ENCODE measurements at regions of chr1 and their contacts with region 1.

Region 1: GRCh38 chr1:33025181-33025571 is 11.5 kb downstream of the AK2 start:
- DNase-seq: no peak
- H3K4me3 Mint-ChIP-seq: peak overlapping the region; percentile 17
- H3K27ac Mint-ChIP-seq: peak overlapping the region; percentile 86
- H3K4me1 Mint-ChIP-seq: peaks cover 63% of the 10 kb centered on the region
- H3K27me3 Mint-ChIP-seq: peaks cover 2% of the 10 kb centered on the region

Region 2: GRCh38 chr1:32769524-32770220 is 255.5 kb before region 1 on chr1:
- intact Hi-C with region 1: no loop called
- DNase-seq: no peak
- H3K4me3 Mint-ChIP-seq: no peak overlapping the region
- H3K27ac Mint-ChIP-seq: no peak overlapping the region
- H3K4me1 Mint-ChIP-seq: peaks cover 13% of the 10 kb centered on the region
- H3K27me3 Mint-ChIP-seq: peaks cover 4% of the 10 kb centered on the region

Region 3: DNA sequence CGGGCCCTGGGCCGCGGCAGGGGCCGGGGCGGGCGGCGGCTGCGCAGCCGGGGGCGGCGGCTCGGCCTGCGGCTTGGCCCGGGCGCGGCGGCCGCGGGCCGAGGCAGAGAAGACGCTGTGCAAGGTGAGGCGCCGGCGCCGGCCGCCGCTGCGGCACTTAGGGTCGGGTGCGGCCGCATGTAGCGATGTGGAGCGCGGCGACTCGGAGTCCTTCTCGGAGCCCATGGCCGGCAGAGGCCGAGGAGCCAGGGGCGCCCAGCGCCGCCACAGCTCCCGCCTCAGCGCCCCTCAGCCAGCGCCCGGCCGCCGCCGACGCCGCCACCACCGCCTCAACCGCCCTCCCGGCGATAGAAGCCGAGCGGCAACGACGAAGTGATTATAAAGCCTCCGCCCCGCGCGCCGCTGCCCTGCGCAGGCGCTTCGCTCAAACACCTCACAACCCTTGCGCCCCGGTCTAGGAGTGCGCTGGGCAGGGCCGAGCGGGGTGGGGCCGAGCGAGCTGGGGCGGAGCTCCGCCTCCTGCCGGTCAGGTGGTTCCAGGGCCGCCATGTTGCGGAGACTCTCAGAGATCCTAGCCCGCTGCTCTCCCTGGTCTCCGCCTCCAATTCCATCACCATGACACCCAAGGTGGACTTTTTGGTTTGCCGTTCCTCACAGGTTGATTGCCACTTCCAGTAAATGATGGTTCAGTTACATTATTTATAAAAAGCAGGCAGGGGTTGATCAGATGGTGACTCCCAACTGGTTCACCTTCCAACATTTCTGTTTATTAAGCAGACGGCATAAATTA is 60.5 kb before region 1 on chr1 and contains the start of gene RNF19B:
- intact Hi-C with region 1: loop called (anchors 1 kb)
- DNase-seq: peak; percentile 94
- H3K4me3 Mint-ChIP-seq: peak within 1 kb of the TSS; percentile 84
- H3K27ac Mint-ChIP-seq: peak within 1 kb of the TSS; percentile 86
- H3K4me1 Mint-ChIP-seq: peaks cover 58% of the 10 kb centered on the region
- H3K27me3 Mint-ChIP-seq: peaks cover 1% of the 10 kb centered on the region
- total RNA-seq, gene RNF19B: 52.1 and 56.5 TPM in 2 replicates

Region 4: GRCh38 chr1:32981003-32981901 is 43.9 kb before region 1 on chr1:
- intact Hi-C with region 1: loop called (anchors 1 kb)
- DNase-seq: peak; percentile 65
- H3K4me3 Mint-ChIP-seq: peak overlapping the region; percentile 60
- H3K27ac Mint-ChIP-seq: peak overlapping the region; percentile 85
- H3K4me1 Mint-ChIP-seq: peaks cover 81% of the 10 kb centered on the region
- H3K27me3 Mint-ChIP-seq: no peaks in the 10 kb centered on the region

Region 5: GRCh38 chr1:32992489-32993323 is 32.5 kb before region 1 on chr1:
- intact Hi-C with region 1: loop called (anchors 1 kb)
- DNase-seq: peak; percentile 81
- H3K4me3 Mint-ChIP-seq: peak overlapping the region; percentile 31
- H3K27ac Mint-ChIP-seq: peak overlapping the region; percentile 87
- H3K4me1 Mint-ChIP-seq: peaks cover 83% of the 10 kb centered on the region
- H3K27me3 Mint-ChIP-seq: no peaks in the 10 kb centered on the region

Region 6: GRCh38 chr1:33007190-33008050 is 17.8 kb before region 1 on chr1:
- intact Hi-C with region 1: loop called (anchors 2 kb)
- DNase-seq: peak; percentile 27
- H3K4me3 Mint-ChIP-seq: no peak overlapping the region
- H3K27ac Mint-ChIP-seq: no peak overlapping the region
- H3K4me1 Mint-ChIP-seq: peaks cover 53% of the 10 kb centered on the region
- H3K27me3 Mint-ChIP-seq: no peaks in the 10 kb centered on the region

Region 7: DNA sequence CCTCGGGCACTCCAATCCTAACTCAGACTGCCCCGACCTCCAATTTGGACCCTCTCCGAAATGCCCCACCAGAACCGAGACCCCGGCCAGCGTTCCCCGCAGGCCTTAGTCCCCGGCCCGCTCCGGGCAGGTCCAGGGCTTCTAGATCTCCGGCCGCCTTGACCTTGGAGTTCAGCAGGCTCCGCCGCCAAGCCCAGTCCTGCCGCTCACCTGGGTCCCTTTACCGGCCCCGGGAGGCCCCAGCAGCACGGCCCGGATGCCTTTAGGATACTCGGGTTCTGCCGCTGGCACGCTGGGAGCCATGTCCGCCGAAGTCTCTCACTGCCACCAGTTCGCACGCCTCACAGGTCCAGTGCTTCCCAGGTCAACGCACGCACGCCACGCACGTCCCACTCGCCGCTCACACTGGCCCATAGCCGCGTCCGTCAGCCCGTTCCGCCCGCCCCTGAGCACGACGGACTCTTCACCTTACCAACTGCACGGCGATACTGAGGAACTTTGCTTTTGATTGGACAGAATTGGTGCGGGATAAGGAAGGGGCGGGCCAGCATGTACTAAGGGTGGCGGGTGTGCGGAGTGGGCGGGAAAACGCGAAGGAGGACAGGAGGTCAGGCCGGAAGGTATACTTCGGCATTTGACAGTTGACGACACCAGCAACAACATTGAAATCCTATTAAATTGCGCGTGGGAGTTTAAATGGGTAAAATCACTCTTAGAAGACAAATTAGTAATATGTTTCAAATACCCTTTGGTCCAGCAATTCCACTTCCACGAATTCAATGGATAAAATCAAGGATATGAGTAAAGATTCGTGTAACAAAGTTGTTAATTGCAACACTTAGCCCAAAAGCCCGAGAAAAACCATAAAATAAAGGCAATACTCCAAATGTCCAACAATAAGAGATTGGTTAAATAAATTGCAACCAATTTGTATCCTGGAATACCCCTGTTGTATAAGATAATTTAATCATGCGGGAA is 11.6 kb after region 1 on chr1 and contains the start of gene AK2:
- intact Hi-C with region 1: loop called (anchors 1 kb)
- DNase-seq: peak; percentile 91
- H3K4me3 Mint-ChIP-seq: peak within 1 kb of the TSS; percentile 91
- H3K27ac Mint-ChIP-seq: peak within 1 kb of the TSS; percentile 90
- H3K4me1 Mint-ChIP-seq: peaks cover 48% of the 10 kb centered on the region
- H3K27me3 Mint-ChIP-seq: no peaks in the 10 kb centered on the region
- total RNA-seq, gene AK2: 387 and 400 TPM in 2 replicates

Region 8: DNA sequence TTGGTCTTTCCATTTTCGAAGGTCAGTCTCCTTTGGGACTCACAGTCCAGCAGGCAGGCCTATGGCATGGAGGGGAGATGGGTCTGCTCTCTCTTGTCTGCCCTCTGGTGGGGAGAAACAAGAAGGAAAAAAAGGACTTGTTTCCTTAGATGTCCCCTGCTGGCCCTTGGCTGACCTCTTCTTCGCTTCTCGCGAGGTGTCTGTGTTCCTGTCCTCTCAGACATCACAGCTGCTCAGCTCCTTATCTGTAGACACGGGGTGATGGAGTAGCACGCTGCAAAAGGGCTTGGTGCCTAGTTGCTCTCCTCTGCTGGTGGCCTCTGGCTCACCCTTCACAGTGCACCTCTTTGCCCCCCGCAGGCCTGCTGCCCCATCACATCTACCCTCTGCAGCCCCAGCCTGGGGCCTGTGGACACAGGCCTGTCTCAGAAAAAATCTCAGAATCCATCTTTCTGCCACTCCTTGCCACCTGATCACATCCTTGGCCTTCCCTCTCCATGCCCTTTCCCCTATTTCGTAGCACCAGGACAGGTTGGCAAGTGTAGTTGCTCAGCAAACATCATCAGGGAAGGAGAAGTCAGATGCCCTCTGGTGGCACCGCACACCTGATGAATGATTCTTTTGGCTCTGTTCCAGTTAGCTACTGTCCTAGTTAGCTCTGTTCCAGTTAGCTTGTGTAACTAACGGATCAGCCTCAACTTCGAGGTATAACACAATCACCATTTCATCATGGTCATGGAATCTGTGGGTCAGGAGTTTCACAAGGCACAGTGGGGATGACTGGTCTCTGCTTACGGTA is 30.2 kb after region 1 on chr1:
- intact Hi-C with region 1: loop called (anchors 1 kb)
- DNase-seq: peak; percentile 12
- H3K4me3 Mint-ChIP-seq: no peak overlapping the region
- H3K27ac Mint-ChIP-seq: no peak overlapping the region
- H3K4me1 Mint-ChIP-seq: peaks cover 14% of the 10 kb centered on the region
- H3K27me3 Mint-ChIP-seq: peaks cover 5% of the 10 kb centered on the region

Region 9: GRCh38 chr1:33392639-33393038 is 367.5 kb after region 1 on chr1:
- intact Hi-C with region 1: no loop called
- DNase-seq: no peak
- H3K4me3 Mint-ChIP-seq: no peak overlapping the region
- H3K27ac Mint-ChIP-seq: no peak overlapping the region
- H3K4me1 Mint-ChIP-seq: peaks cover 7% of the 10 kb centered on the region
- H3K27me3 Mint-ChIP-seq: peaks cover 2% of the 10 kb centered on the region

Measured in activated T-helper 1 cell treated with anti-CD3 and anti-CD28 coated beads, Interleukin-12 subunit alpha, Interleukin-12 subunit beta, Interleukin-2, Interleukin-4 antibody, amounts not matched to agents 30 ng/mL and 10 ng/mL and 1 ng/mL, durations not matched to agents 14 hours and 24 hours and 36 hours (primary cell).